K562 (cell line): ENCODE measurements at regions of chr12 and their contacts with region 1.

Region 1: GRCh38 chr12:34126239-34126641 is 103.9 kb downstream of the ALG10 start:
- DNase-seq: peak in 2 of 4 experiments; percentile 12 to 24
- ATAC-seq: peak; percentile 81
- H3K4me3 ChIP-seq: 0 out of 2 replicates have a peak overlapping the region, but pooled peaks have one; percentile 3
- H3K27ac ChIP-seq: peak overlapping the region; percentile 76
- H3K4me1 ChIP-seq: peaks cover 3 to 16% of the 10 kb centered on the region in 2 experiments; a peak in 3 of 5 replicates
- H3K27me3 ChIP-seq: no peaks in the 10 kb centered on the region
- CTCF ChIP-seq: no peak
- EP300 ChIP-seq: no peak
- POLR2A ChIP-seq: no peak
- RAD21 ChIP-seq: no peak

Region 2: DNA sequence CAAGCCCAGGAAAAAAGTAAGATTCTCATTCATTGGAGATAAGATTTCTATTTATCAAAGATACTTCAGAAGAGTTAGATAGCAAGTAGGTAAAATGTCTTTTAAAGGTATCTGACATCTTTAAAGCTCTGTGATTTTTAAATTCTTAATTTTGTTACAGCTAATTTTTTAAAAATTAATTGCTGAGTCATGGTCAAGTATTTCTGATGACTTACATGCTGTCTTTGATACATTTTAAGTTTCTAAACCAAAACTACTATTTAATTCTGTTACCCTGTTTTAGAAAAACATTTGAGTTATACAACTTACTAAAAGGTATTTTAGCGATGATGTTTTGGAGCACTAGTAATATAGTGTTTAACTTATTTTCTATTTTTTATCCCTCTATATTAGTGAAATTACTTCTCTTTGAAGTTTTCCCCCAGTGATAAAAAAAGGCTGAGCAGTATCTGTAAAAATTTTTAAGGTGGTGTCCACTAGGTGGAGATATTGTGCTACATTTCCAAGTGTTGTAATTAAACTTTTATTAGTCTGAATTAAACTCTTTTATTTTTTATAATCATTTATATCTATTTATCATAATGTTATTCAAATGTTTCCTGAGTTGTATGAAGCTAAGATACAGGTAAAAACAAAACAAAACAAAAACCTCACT is 92.5 kb before region 1 on chr12:
- CTCF ChIA-PET with region 1: no interaction called
- POLR2A ChIA-PET with region 1: no interaction called
- in situ Hi-C with region 1: no loop called
- intact Hi-C with region 1: loop called (anchors 5 kb)
- DNase-seq: peak; percentile 18 to 53 (median 24)
- ATAC-seq: no peak
- H3K4me3 ChIP-seq: no peak overlapping the region
- H3K27ac ChIP-seq: no peak overlapping the region
- H3K4me1 ChIP-seq: no peaks in the 10 kb centered on the region
- H3K27me3 ChIP-seq: no peaks in the 10 kb centered on the region
- CTCF ChIP-seq: peak in 2 of 3 experiments; percentile 27 to 59; a peak in 3 of 6 replicates
- EP300 ChIP-seq: no peak
- POLR2A ChIP-seq: no peak
- RAD21 ChIP-seq: peak; percentile 27 to 58; a peak in 2 of 4 replicates

Region 3: DNA sequence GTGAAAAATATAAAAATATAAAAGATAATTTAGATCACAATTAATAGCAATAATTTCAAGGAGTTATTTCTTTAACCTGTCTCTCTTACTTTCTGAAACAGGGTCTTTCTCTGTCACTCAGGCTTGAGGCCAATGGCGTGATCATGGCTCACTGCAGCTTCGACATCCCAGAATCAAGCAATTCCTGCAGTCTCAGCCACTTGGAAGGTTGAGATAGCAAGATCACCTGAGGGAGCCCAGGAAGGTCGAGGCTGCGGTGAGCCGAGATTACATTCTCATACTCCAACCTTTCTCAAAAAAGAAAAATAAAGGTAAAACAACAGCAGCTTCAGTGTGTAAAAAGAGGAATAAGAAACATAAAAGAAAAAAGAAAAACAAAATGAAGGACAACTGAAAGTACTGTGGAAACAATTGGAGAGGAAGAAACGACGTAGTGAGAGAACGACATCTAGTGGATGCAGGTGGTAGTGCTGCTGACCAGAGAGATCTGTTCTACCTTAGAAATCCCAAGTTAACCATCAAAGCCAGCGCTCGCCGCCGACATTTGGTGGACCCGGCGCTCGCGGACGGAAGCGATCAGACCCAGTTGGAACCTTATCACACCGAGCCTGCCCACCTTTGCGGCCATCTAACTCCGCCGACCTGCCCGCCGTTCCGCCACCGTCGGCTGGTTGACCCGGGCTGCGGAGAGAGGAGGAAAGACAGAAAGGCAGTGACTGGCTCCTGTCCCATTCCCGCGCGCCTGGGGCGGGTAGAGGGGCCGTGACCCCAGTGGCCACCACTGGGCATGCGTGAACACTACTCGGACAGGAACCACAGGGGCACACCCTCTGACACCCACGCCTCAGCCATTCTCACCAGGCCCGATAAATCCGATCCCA is 92.2 kb after region 1 on chr12:
- CTCF ChIA-PET with region 1: interaction called, 19 read pairs
- POLR2A ChIA-PET with region 1: no interaction called
- in situ Hi-C with region 1: loop called (anchors 5 kb)
- intact Hi-C with region 1: loop called (anchors 1 kb)
- DNase-seq: peak; percentile 46 to 78 (median 56)
- ATAC-seq: peak; percentile 90
- H3K4me3 ChIP-seq: 0 out of 2 replicates have a peak overlapping the region, but pooled peaks have one; percentile 19
- H3K27ac ChIP-seq: no peak overlapping the region
- H3K4me1 ChIP-seq: peaks cover 0 to 8% of the 10 kb centered on the region in 2 experiments; a peak in 2 of 5 replicates
- H3K27me3 ChIP-seq: no peaks in the 10 kb centered on the region; a peak in 1 of 5 replicates
- CTCF ChIP-seq: peak; percentile 79 to 91 (median 87)
- EP300 ChIP-seq: no peak
- POLR2A ChIP-seq: no peak
- RAD21 ChIP-seq: peak; percentile 68 to 88

Region 4: GRCh38 chr12:34347367-34347766 is 221.1 kb after region 1 on chr12:
- CTCF ChIA-PET with region 1: no interaction called
- POLR2A ChIA-PET with region 1: no interaction called
- in situ Hi-C with region 1: no loop called
- intact Hi-C with region 1: loop called (anchors 10 kb)
- DNase-seq: peak; percentile 72 to 84 (median 80)
- ATAC-seq: peak; percentile 79
- H3K4me3 ChIP-seq: peak overlapping the region; percentile 35
- H3K27ac ChIP-seq: peak overlapping the region; percentile 72
- H3K4me1 ChIP-seq: peaks cover 25 to 100% of the 10 kb centered on the region in 2 experiments
- H3K27me3 ChIP-seq: 0 out of 5 replicates have a peak, but pooled peaks cover 0 to under 1% of the 10 kb centered on the region in 2 experiments
- CTCF ChIP-seq: peak; percentile 73 to 86 (median 77)
- EP300 ChIP-seq: 0 out of 2 replicates have a peak, but pooled peaks have one; percentile 13
- POLR2A ChIP-seq: no peak; the same call in 1 of the 2 replicates
- RAD21 ChIP-seq: peak in 1 of 2 experiments; percentile 21; a peak in 1 of 4 replicates